HEK293 (cell line): ENCODE measurements at regions of chr1 and their contacts with region 1.

Region 1: DNA sequence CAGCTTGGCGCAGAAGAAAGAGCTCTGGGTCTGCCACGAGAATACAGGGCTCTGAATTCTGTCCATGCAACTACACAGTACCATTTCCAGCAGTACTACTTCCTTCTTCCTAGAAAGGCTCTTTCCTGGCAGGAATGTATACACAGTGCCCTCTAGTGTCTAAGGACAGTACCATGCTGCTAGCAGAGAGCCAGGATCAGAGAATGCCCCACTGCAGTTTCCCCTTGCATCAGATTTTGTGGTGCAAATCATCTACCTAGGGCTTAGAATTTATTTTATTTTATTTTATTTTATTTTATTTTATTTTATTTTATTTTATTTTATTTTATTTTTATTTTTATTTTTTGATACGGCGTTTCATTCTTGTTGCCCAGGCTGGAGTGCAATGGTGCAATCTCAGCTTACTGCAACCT is 50.8 kb downstream of the PAX7 start:
- H3K4me3 ChIP-seq: no peak overlapping the region
- H3K27ac ChIP-seq: no peak overlapping the region
- H3K4me1 ChIP-seq: no peaks in the 10 kb centered on the region
- CTCF ChIP-seq: no peak

Region 2: GRCh38 chr1:18597160-18598042 is 84.0 kb before region 1 on chr1:
- CTCF ChIA-PET with region 1: interaction called, 145 read pairs
- POLR2A ChIA-PET with region 1: no interaction called
- H3K4me3 ChIP-seq: no peak overlapping the region
- H3K27ac ChIP-seq: no peak overlapping the region
- H3K4me1 ChIP-seq: no peaks in the 10 kb centered on the region
- CTCF ChIP-seq: peak; percentile 95

Region 3: DNA sequence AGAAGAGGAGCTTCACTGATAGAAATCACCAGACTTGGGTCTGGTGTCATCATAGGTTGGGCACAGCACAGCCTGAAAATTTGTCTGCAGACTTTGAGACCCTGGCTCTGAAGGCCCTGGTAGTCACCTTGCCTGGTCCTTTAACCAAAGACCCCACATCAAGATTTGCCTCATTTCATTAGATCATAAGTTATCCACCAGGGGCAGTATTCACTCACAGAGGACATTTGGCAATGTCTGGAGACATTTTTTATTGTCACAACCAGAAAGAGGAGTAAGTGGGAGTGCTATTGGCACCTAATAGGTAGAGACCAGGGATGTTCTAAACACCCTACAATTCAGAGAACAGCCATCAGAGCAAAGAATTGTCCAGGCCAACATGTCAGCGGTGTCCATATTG is 72.9 kb before region 1 on chr1:
- CTCF ChIA-PET with region 1: interaction called, 10 read pairs
- POLR2A ChIA-PET with region 1: no interaction called
- H3K4me3 ChIP-seq: no peak overlapping the region
- H3K27ac ChIP-seq: no peak overlapping the region
- H3K4me1 ChIP-seq: no peaks in the 10 kb centered on the region
- CTCF ChIP-seq: no peak

Region 4: GRCh38 chr1:18666438-18666861 is 15.0 kb before region 1 on chr1:
- CTCF ChIA-PET with region 1: interaction called, 18 read pairs
- POLR2A ChIA-PET with region 1: no interaction called
- H3K4me3 ChIP-seq: no peak overlapping the region
- H3K27ac ChIP-seq: no peak overlapping the region
- H3K4me1 ChIP-seq: no peaks in the 10 kb centered on the region
- CTCF ChIP-seq: no peak

Region 5: DNA sequence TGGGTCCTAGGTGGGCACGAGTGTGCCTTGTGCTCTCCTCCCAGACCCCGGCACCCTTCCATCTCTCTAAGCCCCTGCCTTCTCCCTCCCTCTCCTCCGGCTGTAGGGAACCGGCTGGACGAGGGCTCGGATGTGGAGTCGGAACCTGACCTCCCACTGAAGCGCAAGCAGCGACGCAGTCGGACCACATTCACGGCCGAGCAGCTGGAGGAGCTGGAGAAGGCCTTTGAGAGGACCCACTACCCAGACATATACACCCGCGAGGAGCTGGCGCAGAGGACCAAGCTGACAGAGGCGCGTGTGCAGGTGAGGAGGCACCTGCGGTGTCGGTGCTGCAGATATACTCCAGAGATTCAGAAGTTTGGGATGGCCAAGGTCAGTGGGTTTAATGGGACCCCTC is 10.2 kb after region 1 on chr1:
- CTCF ChIA-PET with region 1: interaction called, 13 read pairs
- POLR2A ChIA-PET with region 1: no interaction called
- H3K4me3 ChIP-seq: no peak overlapping the region
- H3K27ac ChIP-seq: no peak overlapping the region
- H3K4me1 ChIP-seq: no peaks in the 10 kb centered on the region
- CTCF ChIP-seq: no peak

Region 6: GRCh38 chr1:18731591-18732235 is 50.3 kb after region 1 on chr1:
- CTCF ChIA-PET with region 1: interaction called, 11 read pairs
- POLR2A ChIA-PET with region 1: no interaction called
- H3K4me3 ChIP-seq: no peak overlapping the region
- H3K27ac ChIP-seq: no peak overlapping the region
- H3K4me1 ChIP-seq: no peaks in the 10 kb centered on the region
- CTCF ChIP-seq: no peak

Region 7: GRCh38 chr1:18855573-18855972 is 174.1 kb after region 1 on chr1:
- CTCF ChIA-PET with region 1: no interaction called
- POLR2A ChIA-PET with region 1: no interaction called
- H3K4me3 ChIP-seq: no peak overlapping the region
- H3K27ac ChIP-seq: no peak overlapping the region
- H3K4me1 ChIP-seq: no peaks in the 10 kb centered on the region
- CTCF ChIP-seq: no peak